ENCODE measurements at regions of chr14 and their contacts with region 1.

Region 1: DNA sequence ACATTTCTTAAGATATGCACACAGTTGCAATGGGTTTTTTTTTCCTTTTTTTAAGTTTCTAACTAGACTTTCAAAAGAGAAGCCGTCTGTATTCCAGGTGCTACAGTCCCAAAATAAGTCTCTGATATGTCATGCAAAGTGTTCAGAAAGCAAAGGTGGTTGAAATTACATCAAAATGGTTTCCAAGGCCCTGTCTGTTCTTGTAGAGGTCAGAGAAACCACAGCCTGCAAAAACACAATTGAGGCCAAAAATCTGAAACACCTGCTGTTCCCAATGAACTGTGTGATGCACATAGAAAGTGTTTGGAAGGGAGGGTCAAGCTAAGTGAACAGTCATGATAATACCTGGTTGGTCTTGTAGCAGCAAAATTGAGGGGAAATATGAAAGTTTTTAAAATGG is 91.0 kb downstream of the VRK1 start:
- DNase-seq: no peak
- ATAC-seq: no peak
- H3K4me3 ChIP-seq: no peak overlapping the region
- H3K4me3 Mint-ChIP-seq: no peak overlapping the region
- H3K27ac ChIP-seq: no peak overlapping the region
- H3K27ac Mint-ChIP-seq: no peak overlapping the region
- H3K4me1 ChIP-seq: no peaks in the 10 kb centered on the region
- H3K4me1 Mint-ChIP-seq: no peaks in the 10 kb centered on the region
- H3K27me3 ChIP-seq: no peaks in the 10 kb centered on the region
- H3K27me3 Mint-ChIP-seq: no peaks in the 10 kb centered on the region
- CTCF ChIP-seq: no peak

Region 2: DNA sequence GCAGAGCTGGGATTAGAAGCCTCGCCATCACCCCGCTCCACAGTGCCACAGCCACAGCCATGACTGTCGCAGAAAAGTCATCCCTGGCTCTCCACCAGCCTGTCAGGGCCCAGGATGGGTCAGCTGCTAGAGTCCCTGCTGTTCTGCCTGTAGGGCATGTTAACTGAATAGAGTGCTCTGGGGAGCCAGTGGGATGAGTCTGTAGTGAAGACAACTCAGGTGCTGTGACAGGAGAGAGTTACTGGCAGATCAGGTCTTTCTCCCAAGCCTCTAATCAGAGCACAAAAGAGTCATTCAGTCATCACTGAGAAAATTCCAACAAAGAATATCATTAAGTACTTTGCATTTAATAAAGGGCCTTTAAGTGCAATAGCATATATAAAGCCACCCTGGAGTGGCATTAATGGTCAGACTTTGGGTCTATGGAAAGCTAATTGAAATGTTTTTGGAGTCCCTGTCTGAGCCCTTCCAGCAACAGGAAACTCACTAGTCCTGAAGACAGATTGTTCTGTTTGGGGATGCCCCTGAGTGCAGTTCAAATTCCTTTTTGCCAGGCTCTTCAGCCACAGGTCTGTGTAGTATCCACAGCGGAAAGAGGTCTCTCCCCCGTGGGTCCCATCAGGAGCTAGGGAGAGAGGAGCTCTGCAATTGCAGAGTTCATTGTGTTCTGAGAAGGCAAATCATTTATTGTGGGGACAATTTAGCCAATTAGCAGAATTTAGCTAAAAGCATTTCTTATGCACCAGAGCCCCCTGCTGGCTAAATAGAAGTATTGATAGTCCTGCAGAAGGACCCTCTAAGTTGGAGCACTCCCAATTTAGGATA is 894.2 kb before region 1 on chr14:
- CTCF ChIA-PET with region 1: no interaction called
- POLR2A ChIA-PET with region 1: no interaction called
- intact Hi-C with region 1: no loop called
- DNase-seq: peak in 4 of 9 experiments; percentile 20 to 57 (median 34)
- ATAC-seq: no peak
- H3K4me3 ChIP-seq: no peak overlapping the region
- H3K4me3 Mint-ChIP-seq: no peak overlapping the region
- H3K27ac ChIP-seq: no peak overlapping the region
- H3K27ac Mint-ChIP-seq: no peak overlapping the region
- H3K4me1 ChIP-seq: no peaks in the 10 kb centered on the region
- H3K4me1 Mint-ChIP-seq: no peaks in the 10 kb centered on the region
- H3K27me3 ChIP-seq: peaks cover 4 to 8% of the 10 kb centered on the region in 2 experiments
- H3K27me3 Mint-ChIP-seq: peaks cover 31% of the 10 kb centered on the region
- CTCF ChIP-seq: peak; percentile 78

Region 3: GRCh38 chr14:97025722-97026121 is 137.6 kb after region 1 on chr14:
- CTCF ChIA-PET with region 1: no interaction called
- POLR2A ChIA-PET with region 1: no interaction called
- intact Hi-C with region 1: no loop called
- DNase-seq: no peak
- ATAC-seq: no peak
- H3K4me3 ChIP-seq: no peak overlapping the region
- H3K4me3 Mint-ChIP-seq: no peak overlapping the region
- H3K27ac ChIP-seq: no peak overlapping the region
- H3K27ac Mint-ChIP-seq: no peak overlapping the region
- H3K4me1 ChIP-seq: peaks cover 8% of the 10 kb centered on the region
- H3K4me1 Mint-ChIP-seq: peaks cover 15% of the 10 kb centered on the region
- H3K27me3 ChIP-seq: no peaks in the 10 kb centered on the region
- H3K27me3 Mint-ChIP-seq: peaks cover 12% of the 10 kb centered on the region
- CTCF ChIP-seq: no peak

Region 4: DNA sequence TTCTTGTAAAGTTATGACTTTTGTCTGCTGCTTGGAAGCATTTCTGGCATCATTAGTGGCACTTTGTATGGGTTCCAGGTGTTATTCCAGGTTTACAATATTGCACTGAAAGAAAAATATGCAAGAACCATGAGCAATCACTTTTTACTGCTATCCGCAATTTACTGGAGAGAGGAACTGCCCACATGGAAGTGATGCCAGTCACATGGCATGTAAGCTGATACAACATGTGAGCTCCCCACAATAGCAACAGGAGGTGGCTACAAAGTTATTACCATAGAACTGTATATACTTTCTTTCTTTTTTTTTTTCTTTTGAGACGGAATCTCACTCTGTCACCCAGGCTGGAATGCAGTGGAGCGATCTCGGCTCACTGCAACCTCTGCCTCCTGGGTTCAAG is 1371.7 kb after region 1 on chr14:
- CTCF ChIA-PET with region 1: no interaction called
- POLR2A ChIA-PET with region 1: no interaction called
- intact Hi-C with region 1: loop called in 1 of 2 experiments (anchors 5 kb)
- DNase-seq: no peak
- ATAC-seq: no peak
- H3K4me3 ChIP-seq: no peak overlapping the region
- H3K4me3 Mint-ChIP-seq: no peak overlapping the region
- H3K27ac ChIP-seq: no peak overlapping the region
- H3K27ac Mint-ChIP-seq: no peak overlapping the region
- H3K4me1 ChIP-seq: no peaks in the 10 kb centered on the region
- H3K4me1 Mint-ChIP-seq: peaks cover 10% of the 10 kb centered on the region
- H3K27me3 ChIP-seq: no peaks in the 10 kb centered on the region
- H3K27me3 Mint-ChIP-seq: no peaks in the 10 kb centered on the region
- CTCF ChIP-seq: no peak

Measured in CD8-positive, alpha-beta T cell (primary cell).